CD4-positive, alpha-beta T cell (primary cell): ENCODE measurements at regions of chr17 and their contacts with region 1.

Region 1: DNA sequence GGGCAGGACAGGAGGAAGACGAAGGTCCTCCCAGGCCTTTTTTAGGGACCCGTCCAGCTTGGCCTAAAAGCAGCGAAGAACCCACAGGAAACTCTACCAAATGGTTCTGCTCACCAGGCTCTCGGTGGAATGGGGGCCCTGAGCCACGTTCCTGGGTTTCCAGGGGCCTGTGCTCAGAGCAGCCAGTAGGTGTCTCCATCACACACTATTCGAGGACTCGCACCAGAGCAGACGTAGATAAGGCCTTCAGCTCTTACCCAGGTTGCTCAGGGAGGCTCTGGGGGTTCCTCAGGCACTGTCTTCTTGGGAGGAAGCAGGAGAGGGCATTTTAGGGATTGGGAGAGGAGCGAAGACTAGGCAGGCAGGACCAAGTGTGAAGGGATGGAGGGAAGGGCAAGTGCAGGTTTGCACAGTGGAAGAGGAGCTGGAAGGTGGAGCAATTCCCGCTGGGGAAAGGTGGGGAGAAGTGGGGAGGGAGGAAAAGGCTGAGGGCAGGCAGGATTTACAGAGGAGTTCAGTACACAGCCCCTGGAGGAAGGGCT is 157.1 kb downstream of the RGS9 start:
- DNase-seq: peak; percentile 32 to 78 (median 50)
- ATAC-seq: peak; percentile 88
- H3K4me3 ChIP-seq: no peak overlapping the region
- H3K4me3 Mint-ChIP-seq: no peak overlapping the region
- H3K27ac ChIP-seq: no peak overlapping the region
- H3K27ac Mint-ChIP-seq: no peak overlapping the region
- H3K4me1 ChIP-seq: peaks cover 7% of the 10 kb centered on the region
- H3K4me1 Mint-ChIP-seq: peaks cover 5% of the 10 kb centered on the region
- H3K27me3 ChIP-seq: no peaks in the 10 kb centered on the region
- H3K27me3 Mint-ChIP-seq: peaks cover 3% of the 10 kb centered on the region
- CTCF ChIP-seq: peak; percentile 76

Region 2: GRCh38 chr17:65173284-65173793 is 120.9 kb before region 1 on chr17:
- CTCF ChIA-PET with region 1: no interaction called
- POLR2A ChIA-PET with region 1: no interaction called
- intact Hi-C with region 1: no loop called
- DNase-seq: peak; percentile 41 to 93 (median 64)
- ATAC-seq: peak; percentile 97
- H3K4me3 ChIP-seq: no peak overlapping the region
- H3K4me3 Mint-ChIP-seq: no peak overlapping the region
- H3K27ac ChIP-seq: peak overlapping the region in 1 of 2 donors; percentile 38
- H3K27ac Mint-ChIP-seq: no peak overlapping the region
- H3K4me1 ChIP-seq: peaks cover 48% of the 10 kb centered on the region
- H3K4me1 Mint-ChIP-seq: peaks cover 19% of the 10 kb centered on the region
- H3K27me3 ChIP-seq: no peaks in the 10 kb centered on the region
- H3K27me3 Mint-ChIP-seq: no peaks in the 10 kb centered on the region
- CTCF ChIP-seq: no peak

Region 3: GRCh38 chr17:65593855-65594845 is 299.9 kb after region 1 on chr17:
- CTCF ChIA-PET with region 1: no interaction called
- POLR2A ChIA-PET with region 1: no interaction called
- intact Hi-C with region 1: no loop called
- DNase-seq: peak in 1 of 14 experiments; percentile 31
- ATAC-seq: no peak
- H3K4me3 ChIP-seq: peak overlapping the region; percentile 6
- H3K4me3 Mint-ChIP-seq: peak overlapping the region; percentile 81
- H3K27ac ChIP-seq: no peak overlapping the region
- H3K27ac Mint-ChIP-seq: no peak overlapping the region
- H3K4me1 ChIP-seq: peaks cover 7% of the 10 kb centered on the region
- H3K4me1 Mint-ChIP-seq: peaks cover 37% of the 10 kb centered on the region
- H3K27me3 ChIP-seq: no peaks in the 10 kb centered on the region
- H3K27me3 Mint-ChIP-seq: no peaks in the 10 kb centered on the region
- CTCF ChIP-seq: no peak

Region 4: DNA sequence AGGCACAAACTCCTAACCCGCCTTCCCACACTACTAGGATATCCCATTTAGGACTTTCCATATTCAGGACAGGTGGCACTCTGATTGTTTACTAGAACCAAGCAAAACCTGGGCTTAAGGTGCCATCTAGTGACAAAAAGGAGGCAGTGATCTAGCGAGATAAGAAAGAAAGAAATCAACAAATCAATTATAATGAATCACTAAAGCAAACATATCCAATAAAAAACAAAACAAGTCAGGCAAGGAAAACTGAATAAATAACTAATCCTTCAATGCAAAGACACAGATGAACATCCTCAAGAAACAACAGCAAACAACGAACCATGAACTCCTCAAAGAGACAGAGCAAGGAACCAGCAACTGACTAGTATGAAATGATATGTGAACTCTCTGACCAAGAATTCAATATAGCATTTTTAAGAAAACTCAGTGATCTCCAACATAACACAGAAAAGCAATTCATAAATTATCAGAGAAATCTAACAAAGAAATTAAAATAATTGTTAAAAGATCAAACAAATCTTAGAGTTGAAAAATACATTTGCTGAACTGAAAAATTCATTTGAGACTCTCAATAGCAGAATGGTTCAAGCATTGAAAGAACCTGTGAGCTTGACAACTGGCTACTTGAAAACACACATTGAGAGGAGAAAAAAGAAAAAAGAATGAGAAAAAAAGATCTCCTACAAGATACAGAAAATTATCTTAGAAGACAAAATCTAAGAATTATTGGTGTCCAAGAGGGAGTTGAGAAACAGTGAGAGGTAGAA is 694.0 kb after region 1 on chr17:
- CTCF ChIA-PET with region 1: no interaction called
- POLR2A ChIA-PET with region 1: no interaction called
- intact Hi-C with region 1: loop called in 1 of 2 experiments (anchors 10 kb)
- DNase-seq: peak in 3 of 14 experiments; percentile 1 to 17 (median 12)
- ATAC-seq: no peak
- H3K4me3 ChIP-seq: no peak overlapping the region
- H3K4me3 Mint-ChIP-seq: no peak overlapping the region
- H3K27ac ChIP-seq: no peak overlapping the region
- H3K27ac Mint-ChIP-seq: no peak overlapping the region
- H3K4me1 ChIP-seq: no peaks in the 10 kb centered on the region
- H3K4me1 Mint-ChIP-seq: no peaks in the 10 kb centered on the region
- H3K27me3 ChIP-seq: no peaks in the 10 kb centered on the region
- H3K27me3 Mint-ChIP-seq: no peaks in the 10 kb centered on the region
- CTCF ChIP-seq: no peak